Uterus (tissue), 4 donors: ENCODE measurements at regions of chr11 and their contacts with region 1.

Region 1: GRCh38 chr11:126480410-126481302 is 125.2 kb downstream of the ST3GAL4 start:
- DNase-seq: peak; percentile 79 to 88
- H3K4me3 ChIP-seq: no peak overlapping the region
- H3K27ac ChIP-seq: peak overlapping the region; percentile 68 to 69
- H3K4me1 ChIP-seq: no peaks in the 10 kb centered on the region
- H3K27me3 ChIP-seq: no peaks in the 10 kb centered on the region
- CTCF ChIP-seq: peak; percentile 94 to 95 (median 94)
- POLR2A ChIP-seq: no peak

Region 2: DNA sequence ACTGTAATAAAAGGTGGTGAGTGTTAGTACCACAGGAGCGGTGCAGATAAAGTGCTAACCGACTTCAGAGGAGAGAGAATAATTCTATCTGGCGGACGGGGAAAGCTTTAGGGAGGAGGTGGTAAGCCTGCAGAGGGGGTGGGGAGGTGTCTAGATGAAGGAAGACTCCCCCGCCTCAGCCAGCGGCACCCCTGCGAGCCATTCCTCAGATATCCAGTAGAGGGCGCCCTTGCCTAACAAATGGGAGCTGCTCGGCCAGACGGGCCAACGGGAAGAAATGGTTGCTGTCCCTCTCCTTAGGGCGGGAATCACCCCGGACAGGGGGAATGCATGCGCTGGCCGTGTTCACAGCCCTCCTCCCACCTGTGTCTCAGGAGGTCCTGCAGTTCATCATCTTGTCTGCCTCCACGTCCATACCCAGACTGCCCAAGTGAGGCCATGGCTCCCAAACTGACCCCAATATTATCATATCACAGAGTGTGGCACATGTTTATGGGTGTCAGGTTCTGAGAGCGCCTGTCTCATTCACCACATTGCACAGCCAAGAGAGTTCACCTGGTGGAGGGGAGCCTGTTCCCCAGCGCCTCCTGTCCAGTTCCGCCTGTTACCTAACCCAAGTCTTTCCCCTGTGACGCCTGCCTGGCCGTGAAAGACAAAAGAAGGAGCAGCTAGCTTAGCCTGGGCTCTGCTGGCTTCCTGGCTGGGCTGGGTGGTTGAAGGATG is 39.7 kb before region 1 on chr11:
- intact Hi-C with region 1: loop called (anchors 2 kb)
- DNase-seq: peak; percentile 84 to 90
- H3K4me3 ChIP-seq: no peak overlapping the region
- H3K27ac ChIP-seq: no peak overlapping the region
- H3K4me1 ChIP-seq: no peaks in the 10 kb centered on the region
- H3K27me3 ChIP-seq: no peaks in the 10 kb centered on the region
- CTCF ChIP-seq: peak; percentile 95 to 97 (median 96)
- POLR2A ChIP-seq: no peak